ENCODE measurements at regions of chr17 and their contacts with region 1.

Region 1: DNA sequence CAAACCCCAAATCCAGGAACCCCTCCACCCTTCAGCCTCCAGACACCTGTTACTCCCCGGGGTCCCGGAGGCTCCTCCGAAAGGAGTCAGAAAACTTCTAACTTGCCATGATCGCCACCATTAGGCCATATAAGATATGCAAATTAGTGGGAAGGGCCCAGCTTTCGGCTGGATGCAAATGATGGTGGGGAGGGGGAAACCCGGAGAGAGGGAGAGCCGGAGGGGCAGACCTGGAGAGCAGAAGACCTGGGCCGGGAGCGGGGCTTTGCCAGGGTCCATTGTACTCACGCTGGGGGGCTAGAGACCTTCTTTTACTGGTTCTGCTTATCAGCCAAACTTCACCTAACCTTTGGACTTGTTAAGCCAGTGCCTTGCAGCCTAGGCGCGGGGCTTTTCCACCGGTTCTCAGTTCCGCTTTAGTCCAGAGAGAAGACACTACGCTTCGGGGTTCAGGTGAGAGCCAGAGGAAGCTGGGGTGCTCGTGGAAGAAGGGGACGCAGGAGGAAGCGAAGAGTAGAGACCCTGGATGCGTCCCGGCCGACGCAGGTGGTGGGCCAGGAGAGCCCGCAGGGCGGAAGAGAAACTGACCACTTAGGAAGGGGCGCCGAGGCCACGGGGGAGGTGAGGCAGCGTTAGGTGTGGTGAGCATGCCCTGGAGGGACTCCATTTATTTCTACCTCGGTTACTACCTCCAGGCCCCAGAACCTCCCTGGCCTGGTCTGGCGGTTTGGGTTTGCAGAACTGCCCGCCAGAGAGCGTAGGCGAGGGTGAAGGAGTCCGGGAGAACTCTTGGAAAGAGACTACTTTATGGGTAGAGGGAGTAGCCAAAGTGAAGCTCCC is at the start of gene HNF1B:
- DNase-seq: peak; percentile 87 to 88
- H3K4me3 ChIP-seq: peak within 1 kb of the TSS; percentile 64
- H3K4me3 Mint-ChIP-seq: peak within 1 kb of the TSS; percentile 100
- H3K27ac Mint-ChIP-seq: peak within 1 kb of the TSS; percentile 100
- H3K4me1 ChIP-seq: peaks cover 21% of the 10 kb centered on the region
- H3K4me1 Mint-ChIP-seq: peaks cover 23% of the 10 kb centered on the region
- H3K27me3 ChIP-seq: no peaks in the 10 kb centered on the region
- H3K27me3 Mint-ChIP-seq: no peaks in the 10 kb centered on the region
- CTCF ChIP-seq: peak in 1 of 2 experiments; percentile 17
- total RNA-seq, gene HNF1B: 36.9 TPM in 2 replicates

Region 2: DNA sequence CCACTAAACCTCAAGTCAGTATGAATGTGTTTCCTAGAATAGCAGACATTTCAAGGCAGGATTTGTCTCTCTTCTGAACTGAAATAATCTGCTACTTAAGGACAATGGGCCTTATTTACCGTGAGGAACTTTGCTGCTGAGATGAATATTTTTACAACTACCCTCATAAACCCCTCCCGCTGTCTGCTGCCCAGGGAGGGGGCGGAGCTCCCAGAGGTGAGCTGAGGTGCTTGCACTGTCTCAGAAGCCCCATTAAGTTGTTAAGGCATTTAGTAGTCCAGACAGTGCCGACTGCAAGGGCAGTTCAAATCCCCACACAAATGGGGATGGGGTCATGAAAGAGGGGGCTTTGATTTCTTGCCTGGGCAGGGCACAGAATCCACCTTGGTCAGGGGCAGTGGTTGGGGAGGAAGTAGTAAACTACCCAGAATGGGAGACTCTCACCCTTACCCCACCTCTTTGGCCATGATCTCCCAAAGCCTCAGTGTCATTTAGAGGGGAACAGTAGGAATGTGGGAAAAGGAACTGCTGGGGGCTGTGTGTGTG is 19.5 kb before region 1 on chr17:
- CTCF ChIA-PET with region 1: no interaction called
- POLR2A ChIA-PET with region 1: no interaction called
- intact Hi-C with region 1: no loop called
- DNase-seq: peak; percentile 65 to 67
- H3K4me3 ChIP-seq: no peak overlapping the region
- H3K4me3 Mint-ChIP-seq: no peak overlapping the region
- H3K27ac Mint-ChIP-seq: peak overlapping the region; percentile 50
- H3K4me1 ChIP-seq: peaks cover 13% of the 10 kb centered on the region; the same call in 1 of the 2 replicates
- H3K4me1 Mint-ChIP-seq: peaks cover 16% of the 10 kb centered on the region
- H3K27me3 ChIP-seq: no peaks in the 10 kb centered on the region
- H3K27me3 Mint-ChIP-seq: no peaks in the 10 kb centered on the region
- CTCF ChIP-seq: no peak

Region 3: DNA sequence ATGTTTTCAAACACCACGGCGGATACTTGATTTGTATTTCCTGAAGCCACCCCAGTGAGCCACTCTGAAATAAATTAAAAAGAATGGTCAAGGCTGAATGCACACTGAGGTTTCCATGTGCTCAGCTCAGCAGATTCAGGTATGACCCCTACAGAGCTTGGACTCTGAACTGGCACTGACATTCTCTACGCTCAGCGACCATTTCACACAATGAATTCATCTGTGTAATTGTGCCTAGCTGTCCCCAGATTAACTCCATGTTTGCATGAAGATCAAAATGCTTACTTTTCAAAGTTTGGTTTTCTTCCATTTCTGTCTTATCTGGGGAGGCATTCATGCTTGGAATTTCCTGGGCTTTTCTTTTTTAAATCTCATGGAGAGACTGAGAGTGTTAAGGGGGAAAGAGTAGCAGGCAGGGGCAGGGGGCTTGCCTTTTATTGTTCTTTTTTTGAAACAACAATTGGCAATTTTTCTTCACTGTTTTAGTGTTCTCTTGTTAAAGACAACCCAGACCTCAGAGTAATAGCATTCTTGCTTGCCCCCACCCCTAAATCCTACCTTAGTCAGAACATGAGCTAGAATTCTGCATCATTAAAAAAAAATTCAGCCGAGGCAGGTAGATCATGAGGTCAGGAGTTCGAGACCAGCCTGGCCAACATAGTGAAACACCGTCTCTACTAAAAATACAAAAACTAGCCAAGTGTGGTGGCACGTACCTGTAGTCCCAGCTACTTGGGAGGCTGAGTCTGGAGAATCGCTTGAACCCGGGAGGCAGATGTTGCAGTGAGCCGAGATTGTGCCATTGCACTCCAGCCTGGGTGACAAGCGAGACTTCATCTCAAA is 85.2 kb after region 1 on chr17:
- CTCF ChIA-PET with region 1: no interaction called
- POLR2A ChIA-PET with region 1: no interaction called
- intact Hi-C with region 1: loop called (anchors 2 kb)
- DNase-seq: peak; percentile 81 to 83
- H3K4me3 ChIP-seq: no peak overlapping the region
- H3K4me3 Mint-ChIP-seq: peak overlapping the region; percentile 12
- H3K27ac Mint-ChIP-seq: peak overlapping the region; percentile 80
- H3K4me1 ChIP-seq: peaks cover 53% of the 10 kb centered on the region
- H3K4me1 Mint-ChIP-seq: peaks cover 62% of the 10 kb centered on the region
- H3K27me3 ChIP-seq: no peaks in the 10 kb centered on the region
- H3K27me3 Mint-ChIP-seq: no peaks in the 10 kb centered on the region
- CTCF ChIP-seq: no peak

Measured in Caco-2 (cell line).